Breast epithelium (tissue), 4 donors: ENCODE measurements at regions of chr1 and their contacts with region 1.

Region 1: DNA sequence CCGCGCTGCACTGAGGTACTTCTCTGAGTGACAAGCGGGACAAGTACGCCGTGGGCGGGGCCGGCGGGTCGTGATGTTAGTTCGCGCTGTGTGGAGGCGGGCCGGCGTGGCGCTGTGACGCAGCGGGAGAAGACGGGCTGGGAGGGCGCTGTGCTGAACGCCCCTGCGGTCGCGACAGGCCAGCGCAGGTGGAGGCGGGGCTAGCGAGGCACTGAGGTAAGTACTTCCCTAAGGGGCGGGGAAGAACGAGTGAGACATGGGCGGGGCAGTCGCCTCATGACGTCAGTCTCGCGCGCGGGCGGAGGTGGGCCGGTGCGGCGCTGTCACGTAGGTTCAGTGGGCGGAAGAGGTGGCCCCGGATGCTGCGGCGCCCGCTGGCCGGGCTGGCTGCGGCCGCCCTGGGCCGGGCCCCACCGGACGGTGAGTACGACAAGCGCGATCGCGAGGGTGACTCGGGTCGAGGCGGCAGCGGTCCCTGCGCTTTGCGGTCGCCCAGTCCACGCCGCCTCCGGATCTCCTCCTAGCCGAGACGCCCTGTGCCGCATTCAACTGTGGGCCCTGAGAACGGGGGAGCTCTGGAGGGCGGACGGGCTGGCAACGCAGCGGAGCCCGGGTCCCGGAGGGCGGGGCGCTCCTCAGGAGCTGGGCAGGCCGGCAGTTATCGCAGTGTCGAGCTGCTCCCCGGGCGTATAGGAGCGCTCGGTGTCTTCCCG is at the start of gene GUK1:
- DNase-seq: peak; percentile 100
- H3K4me3 ChIP-seq: peak within 1 kb of the TSS; percentile 64 to 95 (median 87)
- H3K27ac ChIP-seq: peak within 1 kb of the TSS; percentile 90 to 98
- H3K4me1 ChIP-seq: peaks cover 18 to 29% of the 10 kb centered on the region in 2 donors
- H3K27me3 ChIP-seq: no peaks in the 10 kb centered on the region
- CTCF ChIP-seq: peak in 2 of 3 donors; percentile 16 to 22
- POLR2A ChIP-seq: peak; percentile 80
- total RNA-seq, gene GUK1: 218 to 413 (median 333) TPM

Region 2: GRCh38 chr1:226370144-226370923 is 1769.8 kb before region 1 on chr1:
- intact Hi-C with region 1: no loop called
- DNase-seq: no peak
- H3K4me3 ChIP-seq: no peak overlapping the region
- H3K27ac ChIP-seq: no peak overlapping the region
- H3K4me1 ChIP-seq: no peaks in the 10 kb centered on the region
- H3K27me3 ChIP-seq: no peaks in the 10 kb centered on the region
- CTCF ChIP-seq: no peak
- POLR2A ChIP-seq: no peak

Region 3: DNA sequence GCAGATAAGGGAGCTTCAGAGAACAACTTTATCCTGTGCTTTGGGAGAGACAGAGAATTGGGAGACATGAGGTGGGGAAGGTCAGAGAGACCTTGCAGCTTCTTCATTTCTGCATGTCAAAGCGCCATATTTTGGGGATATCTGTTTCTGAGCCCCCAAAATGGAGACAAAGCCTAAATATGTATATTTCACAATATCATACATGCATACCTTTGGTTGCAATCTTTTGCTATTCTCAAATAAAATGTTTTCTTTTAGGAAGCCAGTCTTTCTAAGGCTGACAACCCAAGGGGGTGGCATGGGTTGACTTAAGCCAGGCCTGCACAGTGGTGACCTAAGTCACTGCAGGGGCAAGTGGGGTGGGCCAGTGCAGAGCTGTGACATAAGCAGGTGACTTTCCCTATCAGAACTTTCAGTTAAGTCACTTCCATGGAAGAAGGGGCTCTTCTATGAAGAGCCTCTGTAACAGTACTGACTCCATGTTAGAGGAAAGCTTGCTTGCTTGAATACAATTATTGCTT is 17.1 kb before region 1 on chr1:
- intact Hi-C with region 1: loop called (anchors 1 kb)
- DNase-seq: no peak
- H3K4me3 ChIP-seq: no peak overlapping the region
- H3K27ac ChIP-seq: no peak overlapping the region
- H3K4me1 ChIP-seq: no peaks in the 10 kb centered on the region
- H3K27me3 ChIP-seq: no peaks in the 10 kb centered on the region
- CTCF ChIP-seq: no peak
- POLR2A ChIP-seq: no peak

Region 4: DNA sequence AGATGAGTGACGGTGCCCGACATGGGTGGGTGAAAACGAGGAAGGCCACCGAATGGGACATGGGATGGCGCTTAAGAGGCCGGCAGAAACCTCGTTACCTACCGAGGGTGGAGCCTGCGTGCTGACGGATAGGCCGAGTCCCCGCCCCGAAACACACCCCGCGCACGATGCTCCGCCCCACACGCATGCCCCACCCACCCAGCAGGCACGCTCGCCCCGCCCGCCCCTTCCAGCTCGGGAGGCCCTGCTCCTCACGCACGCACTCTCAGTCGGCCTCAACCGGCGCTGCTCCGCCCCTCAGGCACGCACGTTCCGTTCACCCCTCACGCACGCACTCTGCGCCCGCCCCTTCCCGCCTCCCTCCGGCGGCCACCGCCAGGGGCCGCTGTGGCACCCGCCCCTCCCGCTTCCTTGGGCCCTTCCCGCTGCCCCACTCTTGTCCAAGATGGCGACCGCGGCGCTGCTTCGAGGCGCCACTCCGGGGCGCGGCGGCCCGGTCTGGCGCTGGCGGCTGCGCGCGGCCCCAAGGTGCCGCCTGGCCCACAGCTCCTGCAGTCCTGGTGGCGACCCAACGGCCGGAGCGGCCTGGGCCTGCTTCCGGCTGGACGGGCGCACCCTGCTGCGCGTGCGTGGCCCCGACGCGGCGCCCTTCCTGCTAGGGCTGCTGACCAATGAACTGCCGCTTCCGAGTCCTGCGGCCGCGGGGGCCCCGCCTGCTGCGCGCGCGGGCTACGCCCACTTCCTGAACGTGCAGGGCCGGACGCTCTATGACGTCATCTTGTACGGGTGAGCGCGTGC is 25.5 kb after region 1 on chr1 and contains the start of gene IBA57:
- intact Hi-C with region 1: loop called (anchors 2 kb)
- DNase-seq: peak; percentile 99 to 100
- H3K4me3 ChIP-seq: peak within 1 kb of the TSS; percentile 65 to 87 (median 73)
- H3K27ac ChIP-seq: peak within 1 kb of the TSS; percentile 99 to 100
- H3K4me1 ChIP-seq: peaks cover 5 to 6% of the 10 kb centered on the region in 2 donors
- H3K27me3 ChIP-seq: no peaks in the 10 kb centered on the region
- CTCF ChIP-seq: peak; percentile 71 to 98 (median 78)
- POLR2A ChIP-seq: peak; percentile 17
- total RNA-seq, gene IBA57: 3.4 to 4.1 (median 3.9) TPM